Activated CD4-positive, alpha-beta memory T cell treated with anti-CD3 and anti-CD28 coated beads, Interleukin-2, amount 10 ng/mL, durations not matched to agents 7 days and 5 days (primary cell): ENCODE measurements at regions of chr6 and their contacts with region 1.

Region 1: DNA sequence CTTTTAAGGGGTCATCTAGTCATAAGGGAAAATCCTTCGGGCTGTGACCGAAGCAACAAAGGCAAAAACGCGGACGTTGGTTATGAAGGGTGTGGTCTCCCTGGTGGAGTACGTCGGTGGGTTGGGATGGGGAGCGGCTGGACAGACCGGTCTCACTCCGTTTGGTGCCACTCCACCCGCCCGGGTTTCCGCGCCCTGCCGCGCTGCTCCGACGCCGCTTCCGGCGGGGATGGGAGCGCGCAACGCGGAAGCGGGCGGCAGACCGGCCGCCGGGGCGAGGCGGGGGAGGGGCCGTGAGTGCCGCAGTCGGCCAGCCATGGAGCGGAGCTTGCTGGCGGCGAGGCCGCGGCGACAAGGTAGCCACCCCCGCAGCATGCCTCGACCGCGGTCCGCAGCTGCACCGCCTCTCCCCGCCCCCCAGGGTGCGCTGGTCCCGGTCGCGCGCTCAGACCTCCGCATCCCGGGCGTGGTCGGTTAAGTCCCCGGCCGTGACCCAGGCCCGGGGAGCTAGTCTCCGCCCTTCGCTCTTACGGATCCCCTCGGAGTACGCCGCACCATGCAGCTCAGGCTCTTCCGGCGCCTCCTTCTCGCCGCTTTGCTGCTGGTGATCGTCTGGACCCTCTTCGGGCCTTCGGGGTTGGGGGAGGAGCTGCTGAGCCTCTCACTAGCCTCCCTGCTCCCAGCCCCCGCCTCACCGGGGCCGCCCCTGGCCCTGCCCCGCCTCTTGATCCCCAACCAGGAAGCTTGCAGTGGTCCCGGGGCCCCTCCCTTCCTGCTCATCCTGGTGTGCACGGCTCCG is at the start of gene B3GALT4:
- DNase-seq: peak; percentile 79
- H3K4me3 Mint-ChIP-seq: peak within 1 kb of the TSS; percentile 92
- H3K27ac Mint-ChIP-seq: peak within 1 kb of the TSS; percentile 98
- H3K4me1 Mint-ChIP-seq: peaks cover 70% of the 10 kb centered on the region
- H3K27me3 Mint-ChIP-seq: no peaks in the 10 kb centered on the region
- total RNA-seq, gene B3GALT4: 25.2 to 26.5 TPM

Region 2: GRCh38 chr6:33288921-33289748 is 12.1 kb after region 1 on chr6 and contains the starts of genes PFDN6 and WDR46:
- CTCF ChIA-PET with region 1: interaction called, 20 read pairs
- POLR2A ChIA-PET with region 1: interaction called, 234 read pairs
- DNase-seq: peak; percentile 87
- H3K4me3 Mint-ChIP-seq: peak within 1 kb of the TSS; percentile 90
- H3K27ac Mint-ChIP-seq: peak within 1 kb of the TSS; percentile 80
- H3K4me1 Mint-ChIP-seq: peaks cover 47% of the 10 kb centered on the region
- H3K27me3 Mint-ChIP-seq: no peaks in the 10 kb centered on the region
- total RNA-seq, gene PFDN6: 63.5 to 65.0 TPM
- total RNA-seq, gene WDR46: 37.5 to 41.7 TPM

Region 3: DNA sequence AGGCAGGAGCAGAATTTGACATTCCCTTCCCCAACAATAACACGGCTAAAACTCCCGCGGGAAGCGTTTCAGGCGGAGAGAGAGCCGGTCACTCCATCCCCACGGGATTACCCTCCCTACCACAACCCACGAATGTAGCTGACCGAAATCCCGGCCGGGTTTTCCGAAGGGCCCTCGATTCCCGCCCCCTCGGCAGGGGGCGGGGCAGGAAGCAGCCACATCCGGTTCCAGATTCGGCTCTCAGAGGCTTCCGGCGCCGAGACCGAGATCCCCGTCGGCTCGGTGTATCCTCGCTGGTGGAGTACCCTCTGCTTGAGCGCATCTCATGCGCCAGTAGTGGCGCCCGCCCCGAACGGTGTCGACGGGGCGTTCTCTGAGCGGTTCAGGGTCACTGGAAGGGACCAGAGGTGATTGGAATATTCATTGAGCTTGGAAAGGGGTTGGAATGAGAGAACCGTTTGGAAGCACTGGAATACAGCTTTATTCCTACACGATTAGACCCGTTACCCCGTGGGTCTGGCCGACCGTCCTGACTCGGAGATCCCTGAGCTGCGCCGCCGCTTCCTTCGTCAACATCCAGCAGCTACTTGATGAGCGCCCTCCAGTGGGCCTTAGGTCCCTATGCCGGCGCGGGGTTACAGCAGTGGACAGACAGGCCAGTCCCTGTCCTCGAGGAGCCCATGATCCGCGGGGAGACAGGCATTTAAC is 22.3 kb after region 1 on chr6:
- CTCF ChIA-PET with region 1: interaction called, 16 read pairs
- POLR2A ChIA-PET with region 1: interaction called, 234 read pairs
- DNase-seq: peak; percentile 94
- H3K4me3 Mint-ChIP-seq: peak overlapping the region; percentile 95
- H3K27ac Mint-ChIP-seq: peak overlapping the region; percentile 100
- H3K4me1 Mint-ChIP-seq: peaks cover 41% of the 10 kb centered on the region
- H3K27me3 Mint-ChIP-seq: no peaks in the 10 kb centered on the region

Region 4: DNA sequence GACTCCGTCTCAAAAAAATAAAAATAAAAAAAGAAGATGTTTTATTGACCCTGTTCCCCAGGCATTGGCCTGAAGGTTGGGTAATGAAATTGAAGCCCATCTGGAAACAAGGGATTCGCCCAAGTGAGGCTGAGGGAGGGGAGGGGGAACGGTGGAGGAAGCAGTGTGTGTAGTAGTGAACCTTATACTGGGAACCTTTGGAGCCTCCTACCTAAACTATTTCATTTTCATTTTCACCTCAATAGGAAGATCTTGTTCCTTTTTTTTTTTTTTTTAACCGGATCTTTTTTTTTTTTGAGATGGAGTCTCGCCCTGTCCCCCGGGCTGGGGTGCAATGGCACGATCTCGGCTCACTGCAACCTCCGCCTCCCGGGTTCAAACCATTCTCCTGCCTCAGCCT is 53.7 kb after region 1 on chr6:
- CTCF ChIA-PET with region 1: no interaction called
- POLR2A ChIA-PET with region 1: no interaction called
- DNase-seq: no peak
- H3K4me3 Mint-ChIP-seq: no peak overlapping the region
- H3K27ac Mint-ChIP-seq: no peak overlapping the region
- H3K4me1 Mint-ChIP-seq: peaks cover 3% of the 10 kb centered on the region
- H3K27me3 Mint-ChIP-seq: no peaks in the 10 kb centered on the region

Region 5: DNA sequence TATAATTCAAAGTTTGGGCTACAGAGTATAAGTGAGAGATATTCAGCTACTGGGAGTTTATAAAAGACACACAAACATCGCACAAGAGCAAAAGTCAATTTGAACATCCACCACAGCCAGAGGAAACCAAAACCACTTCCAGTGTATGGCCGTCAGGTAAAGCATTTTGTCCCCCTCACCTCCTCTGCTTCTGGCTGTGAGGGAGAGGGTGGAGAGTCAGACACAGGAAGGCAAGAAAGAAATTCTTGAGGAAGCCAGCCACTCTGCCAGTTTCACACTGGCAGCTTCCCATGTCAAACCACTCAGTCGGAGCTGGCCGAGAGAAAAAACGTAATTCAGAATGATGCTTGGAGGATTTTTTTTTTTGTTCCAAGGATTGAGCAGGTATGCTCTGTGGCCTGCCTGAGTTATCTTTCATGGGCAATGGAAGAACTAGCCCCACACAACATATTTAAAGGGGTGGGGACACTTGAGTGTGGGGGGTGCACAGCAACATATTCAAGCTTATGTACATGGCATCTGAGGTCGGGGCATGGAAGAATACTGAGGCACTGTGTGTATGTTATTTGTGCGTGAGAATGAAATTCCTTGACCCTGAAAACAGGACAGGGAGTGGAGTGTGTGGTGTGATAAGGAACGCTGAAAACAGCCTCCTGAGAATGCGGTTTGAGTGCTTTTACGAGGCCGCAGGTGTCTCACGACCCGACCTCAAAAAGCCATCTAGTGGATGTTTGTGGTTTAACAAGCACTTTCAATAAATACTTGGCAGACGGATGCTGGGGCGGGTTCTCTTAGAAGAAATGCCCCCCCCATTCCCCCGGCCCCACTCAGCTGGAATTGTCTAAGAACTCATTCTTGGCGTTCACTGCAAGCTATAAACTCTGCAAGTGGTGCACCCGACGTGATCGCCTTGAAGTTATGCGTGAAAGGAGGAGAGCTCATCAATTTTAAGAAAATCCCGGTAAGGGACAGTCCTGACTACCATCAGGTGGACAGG is 67.9 kb after region 1 on chr6:
- CTCF ChIA-PET with region 1: interaction called, 19 read pairs
- POLR2A ChIA-PET with region 1: interaction called, 29 read pairs
- DNase-seq: peak; percentile 79
- H3K4me3 Mint-ChIP-seq: peak overlapping the region; percentile 76
- H3K27ac Mint-ChIP-seq: peak overlapping the region; percentile 97
- H3K4me1 Mint-ChIP-seq: peaks cover 46% of the 10 kb centered on the region
- H3K27me3 Mint-ChIP-seq: peaks cover 2% of the 10 kb centered on the region